Thyroid gland (tissue), 4 donors: ENCODE measurements at regions of chr3 and their contacts with region 1.

Region 1: GRCh38 chr3:46496741-46497554 is 828 bp upstream of the RTP3 start:
- DNase-seq: peak in 1 of 2 donors; percentile 34
- H3K4me3 ChIP-seq: no peak overlapping the region
- H3K27ac ChIP-seq: no peak overlapping the region
- H3K4me1 ChIP-seq: peaks cover 6 to 8% of the 10 kb centered on the region in 2 donors
- H3K27me3 ChIP-seq: no peaks in the 10 kb centered on the region
- CTCF ChIP-seq: peak in 1 of 6 experiments; percentile 30
- POLR2A ChIP-seq: no peak

Region 2: DNA sequence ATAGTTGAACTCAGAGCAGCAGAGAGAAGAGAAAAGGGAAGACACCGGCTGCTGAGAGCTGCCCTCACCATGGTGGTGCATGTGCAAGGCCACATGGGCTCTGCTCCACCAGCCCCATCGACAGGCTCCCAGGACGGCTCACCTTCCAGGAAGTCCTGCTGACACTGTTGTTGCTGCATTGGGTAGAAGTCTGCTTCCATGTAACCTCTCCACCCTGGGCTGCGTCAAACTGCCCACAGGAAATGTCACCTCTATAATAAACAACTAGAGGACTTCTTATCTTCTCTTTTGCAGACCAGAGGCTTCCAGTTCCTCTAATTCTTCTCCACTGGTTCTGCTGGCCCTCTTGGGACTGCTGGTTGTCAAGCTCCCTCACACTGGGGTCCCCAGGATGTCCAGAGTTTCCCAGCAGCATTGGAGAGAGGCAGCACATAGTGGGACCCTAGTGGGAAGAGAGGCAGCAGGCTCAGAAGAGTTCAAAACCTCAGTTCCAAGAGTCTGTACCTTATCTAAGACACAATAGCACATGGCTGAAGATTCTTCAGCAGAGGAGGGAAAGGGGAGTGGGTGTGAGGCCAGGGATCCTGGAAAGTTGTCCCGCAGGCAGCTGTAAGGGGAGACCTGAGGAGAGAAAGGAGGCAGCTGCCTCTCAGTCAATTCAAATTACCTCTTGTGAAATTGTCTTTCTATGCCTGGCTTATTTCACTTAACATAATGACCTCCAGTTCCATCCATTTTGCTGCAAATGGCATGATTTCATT is 260.5 kb before region 1 on chr3:
- intact Hi-C with region 1: no loop called
- DNase-seq: no peak
- H3K4me3 ChIP-seq: no peak overlapping the region
- H3K27ac ChIP-seq: no peak overlapping the region
- H3K4me1 ChIP-seq: no peaks in the 10 kb centered on the region
- H3K27me3 ChIP-seq: no peaks in the 10 kb centered on the region
- CTCF ChIP-seq: no peak
- POLR2A ChIP-seq: no peak

Region 3: DNA sequence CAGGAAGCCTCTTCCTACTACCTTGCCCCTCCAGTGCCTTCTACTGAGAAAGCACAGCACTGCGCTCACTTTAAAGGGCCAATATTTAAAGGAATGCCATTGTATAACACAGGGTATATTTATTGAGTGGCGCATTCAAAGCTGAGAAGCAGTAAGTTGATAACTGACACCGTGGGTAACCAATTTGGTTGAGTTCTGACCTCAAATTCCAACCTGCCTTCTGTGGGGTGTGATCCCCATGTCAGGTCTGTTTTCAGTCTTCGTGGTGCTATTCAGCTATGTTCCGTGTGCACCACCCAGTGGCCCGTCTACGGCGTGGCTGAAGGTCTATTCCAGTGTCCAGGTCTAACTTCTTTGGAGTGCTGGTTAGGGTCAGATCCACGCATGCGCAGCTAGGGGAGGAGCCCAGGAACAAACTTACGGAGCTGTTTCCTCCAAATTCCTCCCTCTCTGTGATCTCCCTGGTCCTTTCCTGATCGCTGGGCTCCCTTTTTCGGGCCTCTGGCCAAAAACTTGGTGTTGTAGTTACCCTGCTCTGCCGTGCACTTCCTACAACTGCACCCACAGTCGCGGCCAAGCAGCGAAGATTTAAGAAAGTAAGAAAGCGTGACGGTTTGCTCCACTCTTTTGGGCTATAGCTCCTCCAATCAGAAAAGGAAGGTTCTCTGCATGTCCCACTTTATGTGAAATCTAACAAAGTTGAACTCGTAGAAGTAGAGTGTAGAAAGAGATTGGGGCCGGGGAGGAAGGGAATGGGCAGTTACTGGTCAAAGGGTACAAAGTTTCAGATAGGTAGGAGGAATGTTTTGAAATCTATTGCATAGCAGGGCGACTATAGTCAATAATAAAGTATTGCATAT is 61.5 kb after region 1 on chr3:
- intact Hi-C with region 1: loop called (anchors 10 kb)
- DNase-seq: peak; percentile 88 to 96
- H3K4me3 ChIP-seq: no peak overlapping the region
- H3K27ac ChIP-seq: peak overlapping the region; percentile 43 to 79 (median 75)
- H3K4me1 ChIP-seq: peaks cover 30 to 36% of the 10 kb centered on the region in 2 donors
- H3K27me3 ChIP-seq: no peaks in the 10 kb centered on the region
- CTCF ChIP-seq: peak in 5 of 6 experiments; percentile 13 to 95 (median 65)
- POLR2A ChIP-seq: peak in 1 of 2 donors; percentile 80